Activated CD8-positive, alpha-beta memory T cell treated with anti-CD3 and anti-CD28 coated beads, Interleukin-2, amount 10 ng/mL, durations not matched to agents 7 days and 5 days (primary cell): ENCODE measurements at regions of chrX and their contacts with region 1.

Region 1: DNA sequence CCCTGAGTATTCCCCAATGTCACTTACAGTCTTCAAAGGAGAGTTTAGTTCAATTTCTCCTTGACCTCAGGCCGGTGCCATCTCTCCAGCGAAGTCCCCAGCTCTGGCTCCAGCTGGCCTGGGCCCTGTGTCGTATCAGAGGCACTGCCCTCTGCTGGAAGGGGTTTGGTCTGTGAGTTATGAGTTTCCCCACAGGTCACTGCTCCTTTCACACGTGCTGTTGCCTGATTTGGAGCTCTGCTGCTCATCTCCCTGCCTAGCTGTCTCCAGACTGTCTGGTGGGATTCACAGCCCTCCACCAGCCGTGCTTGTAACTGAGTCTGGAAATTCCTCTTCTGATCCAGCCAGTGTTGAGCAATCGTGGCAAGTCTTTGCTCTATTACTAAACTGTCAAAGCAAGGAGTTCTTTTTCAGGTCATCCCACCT is at the start of gene RAP2C:
- DNase-seq: peak; percentile 81
- ATAC-seq: peak; percentile 41
- H3K4me3 Mint-ChIP-seq: peak within 1 kb of the TSS; percentile 87
- H3K27ac Mint-ChIP-seq: peak within 1 kb of the TSS; percentile 94
- H3K4me1 Mint-ChIP-seq: peaks cover 15% of the 10 kb centered on the region
- H3K27me3 Mint-ChIP-seq: no peaks in the 10 kb centered on the region
- total RNA-seq, gene RAP2C: 32.5 to 39.7 TPM

Region 2: GRCh38 chrX:131841496-131842410 is 377.6 kb before region 1 on chrX:
- CTCF ChIA-PET with region 1: interaction called, 12 read pairs
- DNase-seq: peak; percentile 41
- ATAC-seq: peak; percentile 66
- H3K4me3 Mint-ChIP-seq: no peak overlapping the region
- H3K27ac Mint-ChIP-seq: no peak overlapping the region
- H3K4me1 Mint-ChIP-seq: peaks cover 7% of the 10 kb centered on the region
- H3K27me3 Mint-ChIP-seq: no peaks in the 10 kb centered on the region

Region 3: DNA sequence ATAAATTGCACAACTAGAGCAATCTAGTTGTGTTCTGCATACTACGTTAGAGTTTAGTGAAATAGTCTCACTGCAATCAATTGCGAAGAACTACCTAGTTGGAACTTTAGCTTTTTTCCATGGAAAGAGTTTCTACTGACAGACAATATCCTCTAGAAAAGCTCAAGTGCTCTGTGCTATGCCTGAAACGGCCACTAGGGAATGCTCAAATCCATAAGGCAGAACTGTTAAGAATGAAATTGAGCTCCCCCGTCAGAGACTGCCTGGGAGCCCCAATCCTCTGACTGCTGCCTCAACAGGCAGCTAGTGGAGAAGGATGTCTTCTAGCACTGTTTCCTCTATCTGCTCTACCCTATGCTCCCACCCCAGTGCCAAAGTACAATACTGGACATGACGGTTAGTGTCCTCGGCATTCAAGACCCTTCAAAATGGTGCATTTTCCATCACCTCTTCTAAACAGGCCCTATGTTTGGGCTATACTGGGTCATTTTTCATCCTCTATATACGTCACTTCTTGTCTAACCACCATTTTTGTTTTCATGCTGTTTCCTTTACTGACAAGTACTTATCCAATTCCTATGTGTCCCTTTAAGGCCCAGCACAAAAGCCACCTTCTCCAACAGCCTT is 126.8 kb before region 1 on chrX:
- CTCF ChIA-PET with region 1: interaction called, 19 read pairs
- DNase-seq: peak; percentile 64
- ATAC-seq: peak; percentile 69
- H3K4me3 Mint-ChIP-seq: no peak overlapping the region
- H3K27ac Mint-ChIP-seq: no peak overlapping the region
- H3K4me1 Mint-ChIP-seq: peaks cover 12% of the 10 kb centered on the region
- H3K27me3 Mint-ChIP-seq: no peaks in the 10 kb centered on the region

Region 4: DNA sequence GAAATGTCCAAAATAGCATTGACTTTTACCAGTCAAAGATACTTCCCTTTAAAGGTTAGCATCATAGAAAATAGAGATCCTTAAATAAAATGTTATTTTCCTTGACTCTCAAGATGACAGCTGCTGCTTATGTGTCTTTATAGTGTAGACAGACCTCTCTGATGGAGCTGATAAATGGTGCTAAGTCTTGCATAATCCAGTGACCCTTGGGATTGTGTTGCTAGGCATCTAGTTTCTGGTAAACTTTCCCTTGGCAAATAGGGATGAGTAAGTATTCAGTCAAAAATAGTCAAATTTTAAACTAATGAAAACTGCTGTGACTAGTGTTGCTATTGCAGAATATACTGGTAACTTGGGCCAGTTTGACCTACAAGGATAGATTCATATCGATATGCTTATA is 215.9 kb after region 1 on chrX:
- CTCF ChIA-PET with region 1: no interaction called
- DNase-seq: no peak
- ATAC-seq: no peak
- H3K4me3 Mint-ChIP-seq: no peak overlapping the region
- H3K27ac Mint-ChIP-seq: no peak overlapping the region
- H3K4me1 Mint-ChIP-seq: no peaks in the 10 kb centered on the region
- H3K27me3 Mint-ChIP-seq: no peaks in the 10 kb centered on the region